Naive thymus-derived CD4-positive, alpha-beta T cell (primary cell): ENCODE measurements at regions of chrX and their contacts with region 1.

Region 1: DNA sequence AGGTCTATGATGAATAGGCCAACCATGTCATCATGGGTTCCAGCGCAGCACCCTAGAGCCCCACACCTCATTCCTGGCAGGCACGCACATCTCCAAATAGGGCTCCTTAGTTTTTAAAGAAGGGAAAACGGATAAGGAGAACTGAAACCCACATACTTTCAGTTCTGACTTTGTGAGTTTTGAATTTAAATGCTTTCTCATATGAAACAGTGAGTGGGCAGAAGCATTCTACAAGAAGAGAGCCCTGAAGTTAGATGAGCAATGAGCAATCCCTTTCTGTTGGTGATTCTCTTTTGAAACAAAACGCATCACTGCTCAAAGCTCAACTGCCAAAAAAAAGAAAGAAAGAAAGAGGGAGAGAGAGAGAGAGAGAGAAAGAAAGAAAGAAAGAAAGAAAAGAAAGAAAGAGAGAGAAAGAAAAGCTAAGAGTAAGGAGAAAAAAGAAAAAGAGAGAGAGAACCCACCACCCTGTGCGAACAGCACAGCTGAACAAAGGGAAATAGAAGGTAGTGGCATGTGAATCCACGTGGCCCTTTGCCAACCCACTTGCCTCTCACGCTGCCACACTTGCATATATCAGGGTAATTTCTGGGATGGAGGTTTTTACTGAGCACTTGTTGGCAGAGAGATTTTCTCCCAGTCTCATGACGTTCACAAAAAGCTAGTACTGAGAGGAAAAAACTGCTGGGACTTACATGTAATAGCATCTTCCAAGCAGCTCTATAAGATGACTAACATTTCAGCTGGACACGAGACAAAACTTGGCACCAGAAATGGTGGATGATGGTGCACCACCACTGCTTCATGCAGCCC is 31.0 kb downstream of the TMSB4X start:
- DNase-seq: peak in 4 of 9 donors; percentile 17 to 39 (median 30)
- ATAC-seq: peak; percentile 61
- H3K4me3 ChIP-seq: no peak overlapping the region
- H3K4me3 Mint-ChIP-seq: peak overlapping the region; percentile 61 to 88 (median 72)
- H3K27ac ChIP-seq: peak overlapping the region; percentile 58
- H3K27ac Mint-ChIP-seq: peak overlapping the region; percentile 86 to 100 (median 95)
- H3K4me1 ChIP-seq: peaks cover 37 to 61% of the 10 kb centered on the region in 2 donors
- H3K4me1 Mint-ChIP-seq: peaks cover 33 to 83% (median 55%) of the 10 kb centered on the region in 7 donors
- H3K27me3 ChIP-seq: no peaks in the 10 kb centered on the region
- H3K27me3 Mint-ChIP-seq: no peaks in the 10 kb centered on the region

Region 2: DNA sequence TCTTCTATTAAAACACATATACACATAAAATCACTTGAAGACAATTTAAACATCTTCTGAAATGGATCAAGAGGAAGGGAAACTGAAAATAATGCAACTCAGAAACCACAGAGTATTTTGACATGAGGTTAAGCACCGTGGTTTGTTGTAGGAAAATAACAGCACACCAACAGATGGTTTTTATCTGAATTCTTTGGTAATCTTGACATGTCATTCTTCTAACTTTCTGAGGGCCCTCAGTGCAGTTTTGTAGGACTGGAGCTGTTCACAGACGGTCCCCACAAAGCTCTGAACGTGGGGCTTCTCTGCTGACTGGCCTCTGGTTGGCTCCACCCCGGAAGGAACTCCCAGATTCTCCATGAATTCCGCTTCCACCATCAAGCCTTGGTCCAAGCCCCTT is 115.4 kb before region 1 on chrX:
- CTCF ChIA-PET with region 1: no interaction called
- POLR2A ChIA-PET with region 1: no interaction called
- intact Hi-C with region 1: no loop called
- DNase-seq: peak in 1 of 9 donors; percentile 42
- ATAC-seq: peak; percentile 41
- H3K4me3 ChIP-seq: no peak overlapping the region
- H3K4me3 Mint-ChIP-seq: peak overlapping the region in 3 of 10 donors; percentile 10 to 64 (median 16)
- H3K27ac ChIP-seq: no peak overlapping the region
- H3K27ac Mint-ChIP-seq: peak overlapping the region in 4 of 9 donors; percentile 28 to 94 (median 40)
- H3K4me1 ChIP-seq: peaks cover 0 to 13% of the 10 kb centered on the region in 2 donors
- H3K4me1 Mint-ChIP-seq: peaks cover 4 to 52% (median 20%) of the 10 kb centered on the region in 7 donors
- H3K27me3 ChIP-seq: no peaks in the 10 kb centered on the region
- H3K27me3 Mint-ChIP-seq: no peaks in the 10 kb centered on the region

Region 3: GRCh38 chrX:13022926-13023325 is 17.1 kb after region 1 on chrX:
- CTCF ChIA-PET with region 1: no interaction called
- POLR2A ChIA-PET with region 1: interaction called, 153 read pairs
- intact Hi-C with region 1: loop called in 1 of 2 experiments (anchors 2 kb)
- DNase-seq: no peak
- ATAC-seq: no peak
- H3K4me3 ChIP-seq: no peak overlapping the region
- H3K4me3 Mint-ChIP-seq: peak overlapping the region in 7 of 10 donors; percentile 4 to 61 (median 43)
- H3K27ac ChIP-seq: no peak overlapping the region
- H3K27ac Mint-ChIP-seq: peak overlapping the region in 8 of 9 donors; percentile 44 to 87 (median 79)
- H3K4me1 ChIP-seq: peaks cover 33 to 49% of the 10 kb centered on the region in 2 donors
- H3K4me1 Mint-ChIP-seq: peaks cover 27 to 72% (median 56%) of the 10 kb centered on the region in 7 donors
- H3K27me3 ChIP-seq: no peaks in the 10 kb centered on the region
- H3K27me3 Mint-ChIP-seq: no peaks in the 10 kb centered on the region

Region 4: DNA sequence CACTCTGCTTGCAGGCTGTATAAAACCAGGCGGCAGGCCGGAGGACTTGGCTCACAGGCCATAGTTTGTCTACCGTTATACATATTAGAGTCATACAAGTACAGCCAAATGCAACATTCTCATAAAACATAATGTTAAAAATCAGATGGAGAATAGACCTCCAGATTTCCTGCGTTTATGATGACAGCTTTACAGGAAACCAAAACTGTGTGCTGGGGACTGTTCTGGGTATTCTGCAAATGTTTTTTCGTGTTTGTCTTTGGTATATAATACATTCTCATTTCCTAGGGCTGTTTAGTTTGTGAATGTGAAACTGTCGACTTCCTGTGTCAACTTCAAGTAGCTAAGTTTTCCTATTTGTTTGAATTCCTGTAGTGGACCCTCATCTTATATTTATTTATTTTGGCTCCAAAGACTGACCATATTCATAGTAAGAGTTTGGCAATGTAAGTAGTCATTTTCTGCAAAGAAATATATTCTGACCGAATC is 118.0 kb after region 1 on chrX:
- CTCF ChIA-PET with region 1: no interaction called
- POLR2A ChIA-PET with region 1: no interaction called
- intact Hi-C with region 1: no loop called
- DNase-seq: peak in 4 of 9 donors; percentile 14 to 33 (median 24)
- ATAC-seq: peak; percentile 29
- H3K4me3 ChIP-seq: peak overlapping the region; percentile 29
- H3K4me3 Mint-ChIP-seq: peak overlapping the region; percentile 18 to 76 (median 66)
- H3K27ac ChIP-seq: peak overlapping the region; percentile 52
- H3K27ac Mint-ChIP-seq: peak overlapping the region; percentile 84 to 95 (median 91)
- H3K4me1 ChIP-seq: peaks cover 19 to 25% of the 10 kb centered on the region in 2 donors
- H3K4me1 Mint-ChIP-seq: peaks cover 5 to 65% (median 48%) of the 10 kb centered on the region in 7 donors
- H3K27me3 ChIP-seq: no peaks in the 10 kb centered on the region
- H3K27me3 Mint-ChIP-seq: no peaks in the 10 kb centered on the region